ENCODE measurements at regions of chr17 and their contacts with region 1.

Region 1: GRCh38 chr17:511001-511698 is 158.5 kb upstream of the RPH3AL start:
- DNase-seq: no peak
- ATAC-seq: no peak
- H3K4me3 ChIP-seq: no peak overlapping the region
- H3K27ac ChIP-seq: no peak overlapping the region
- H3K4me1 ChIP-seq: no peaks in the 10 kb centered on the region
- H3K27me3 ChIP-seq: no peaks in the 10 kb centered on the region
- CTCF ChIP-seq: no peak
- EP300 ChIP-seq: no peak
- POLR2A ChIP-seq: no peak
- RAD21 ChIP-seq: no peak

Region 2: GRCh38 chr17:422196-422930 is 88.8 kb before region 1 on chr17:
- CTCF ChIA-PET with region 1: no interaction called
- POLR2A ChIA-PET with region 1: no interaction called
- RAD21 ChIA-PET with region 1: no interaction called
- SMC1A ChIA-PET with region 1: no interaction called
- in situ Hi-C with region 1: loop called (anchors 5 kb)
- intact Hi-C with region 1: no loop called
- DNase-seq: no peak
- ATAC-seq: no peak
- H3K4me3 ChIP-seq: no peak overlapping the region
- H3K27ac ChIP-seq: no peak overlapping the region
- H3K4me1 ChIP-seq: peaks cover 7% of the 10 kb centered on the region
- H3K27me3 ChIP-seq: no peaks in the 10 kb centered on the region
- CTCF ChIP-seq: no peak
- EP300 ChIP-seq: no peak
- POLR2A ChIP-seq: no peak
- RAD21 ChIP-seq: no peak

Region 3: GRCh38 chr17:444879-445454 is 66.2 kb before region 1 on chr17:
- CTCF ChIA-PET with region 1: no interaction called
- POLR2A ChIA-PET with region 1: no interaction called
- RAD21 ChIA-PET with region 1: no interaction called
- SMC1A ChIA-PET with region 1: no interaction called
- in situ Hi-C with region 1: no loop called
- intact Hi-C with region 1: no loop called
- DNase-seq: no peak
- ATAC-seq: no peak
- H3K4me3 ChIP-seq: no peak overlapping the region
- H3K27ac ChIP-seq: no peak overlapping the region
- H3K4me1 ChIP-seq: no peaks in the 10 kb centered on the region
- H3K27me3 ChIP-seq: no peaks in the 10 kb centered on the region
- CTCF ChIP-seq: no peak
- EP300 ChIP-seq: no peak
- POLR2A ChIP-seq: no peak
- RAD21 ChIP-seq: no peak

Region 4: GRCh38 chr17:549177-550040 is 38.3 kb after region 1 on chr17:
- CTCF ChIA-PET with region 1: no interaction called
- POLR2A ChIA-PET with region 1: no interaction called
- RAD21 ChIA-PET with region 1: no interaction called
- SMC1A ChIA-PET with region 1: no interaction called
- in situ Hi-C with region 1: no loop called
- intact Hi-C with region 1: no loop called
- DNase-seq: no peak
- ATAC-seq: no peak
- H3K4me3 ChIP-seq: no peak overlapping the region
- H3K27ac ChIP-seq: no peak overlapping the region
- H3K4me1 ChIP-seq: no peaks in the 10 kb centered on the region
- H3K27me3 ChIP-seq: no peaks in the 10 kb centered on the region
- CTCF ChIP-seq: no peak
- EP300 ChIP-seq: no peak
- POLR2A ChIP-seq: no peak
- RAD21 ChIP-seq: no peak

Region 5: GRCh38 chr17:1834380-1835149 is 1323.4 kb after region 1 on chr17:
- CTCF ChIA-PET with region 1: no interaction called
- POLR2A ChIA-PET with region 1: no interaction called
- RAD21 ChIA-PET with region 1: no interaction called
- SMC1A ChIA-PET with region 1: no interaction called
- in situ Hi-C with region 1: no loop called
- intact Hi-C with region 1: no loop called
- DNase-seq: peak; percentile 96
- ATAC-seq: peak; percentile 80
- H3K4me3 ChIP-seq: peak overlapping the region; percentile 38; the same call in 1 of the 2 replicates
- H3K27ac ChIP-seq: peak overlapping the region; percentile 53
- H3K4me1 ChIP-seq: peaks cover 21% of the 10 kb centered on the region
- H3K27me3 ChIP-seq: no peaks in the 10 kb centered on the region
- CTCF ChIP-seq: no peak
- EP300 ChIP-seq: peak; percentile 90 to 91
- POLR2A ChIP-seq: no peak
- RAD21 ChIP-seq: no peak